ENCODE measurements at regions of chr9 and their contacts with region 1.

Region 1: DNA sequence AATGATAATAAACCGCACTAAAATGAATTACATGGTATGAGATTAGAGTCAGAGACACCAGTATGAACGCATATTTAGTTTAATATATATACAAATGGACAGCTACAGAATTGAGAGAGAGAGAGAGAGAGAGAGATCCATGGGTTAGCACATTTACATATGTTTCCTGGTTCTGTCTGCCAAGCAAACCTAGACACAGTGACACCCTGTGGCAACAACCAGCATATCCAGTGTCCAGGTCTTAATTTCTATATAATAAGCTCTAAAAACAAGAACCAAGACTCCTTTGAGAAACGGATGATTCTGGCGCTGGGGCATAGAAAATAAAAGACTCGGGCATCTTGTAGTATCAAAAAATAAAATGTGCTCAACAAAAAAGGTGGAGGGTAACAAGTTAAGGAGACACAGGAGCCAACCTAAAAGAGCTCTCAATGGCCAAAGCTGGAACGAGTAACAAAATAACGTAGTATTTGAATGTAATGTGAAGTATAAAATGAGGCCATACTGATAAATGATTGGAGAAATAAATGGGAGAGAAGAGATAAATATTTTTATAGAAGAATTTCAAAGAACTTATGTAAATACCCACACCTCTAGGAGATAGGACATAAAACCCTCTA is 84.5 kb downstream of the RFX3 start:
- DNase-seq: peak; percentile 61 to 65
- H3K4me3 ChIP-seq: no peak overlapping the region
- H3K4me1 ChIP-seq: no peaks in the 10 kb centered on the region
- H3K27me3 ChIP-seq: no peaks in the 10 kb centered on the region

Region 2: DNA sequence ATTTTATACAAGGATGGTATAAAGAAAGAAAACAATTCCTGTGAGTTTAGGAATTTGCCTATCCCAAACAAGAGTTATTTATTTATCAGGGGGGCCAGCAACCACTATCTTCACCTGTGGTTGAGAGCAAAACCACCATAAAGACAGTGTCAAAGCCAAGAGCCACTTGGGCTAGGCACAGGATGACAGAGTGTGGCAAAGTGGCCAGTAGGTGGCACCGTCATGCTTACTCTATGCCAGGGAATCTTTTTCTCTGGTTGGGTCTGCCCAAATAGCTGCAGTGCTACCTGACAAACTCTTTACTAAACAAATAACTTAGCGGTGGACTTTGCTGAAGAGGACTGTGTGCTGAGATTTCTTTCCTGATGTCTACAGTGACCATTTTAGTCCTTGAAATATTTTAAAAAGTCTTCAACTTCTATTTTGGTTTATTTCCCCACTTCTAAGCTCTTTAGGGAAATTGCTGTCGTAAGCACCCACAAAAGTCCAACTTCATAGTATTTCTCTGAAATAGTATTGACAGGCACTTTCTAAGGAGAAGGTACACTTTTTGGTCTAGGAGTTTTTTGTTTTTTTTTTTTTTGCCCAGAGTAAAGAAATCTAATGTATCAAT is 200.5 kb before region 1 on chr9:
- in situ Hi-C with region 1: loop called (anchors 25 kb)
- DNase-seq: peak; percentile 72 to 78
- H3K4me3 ChIP-seq: no peak overlapping the region
- H3K4me1 ChIP-seq: no peaks in the 10 kb centered on the region; the same call in 1 of the 2 replicates
- H3K27me3 ChIP-seq: no peaks in the 10 kb centered on the region

Region 3: GRCh38 chr9:3875364-3876132 is 434.2 kb after region 1 on chr9:
- in situ Hi-C with region 1: no loop called
- DNase-seq: no peak
- H3K4me3 ChIP-seq: no peak overlapping the region
- H3K4me1 ChIP-seq: peaks cover 20% of the 10 kb centered on the region
- H3K27me3 ChIP-seq: no peaks in the 10 kb centered on the region